Panc1 (cell line): ENCODE measurements at regions of chr2 and their contacts with region 1.

Region 1: GRCh38 chr2:223513771-223514455 is 88.2 kb downstream of the SCG2 start:
- DNase-seq: no peak
- ATAC-seq: no peak
- H3K4me3 ChIP-seq: no peak overlapping the region
- H3K27ac ChIP-seq: no peak overlapping the region
- H3K4me1 ChIP-seq: no peaks in the 10 kb centered on the region
- H3K27me3 ChIP-seq: no peaks in the 10 kb centered on the region
- CTCF ChIP-seq: no peak

Region 2: DNA sequence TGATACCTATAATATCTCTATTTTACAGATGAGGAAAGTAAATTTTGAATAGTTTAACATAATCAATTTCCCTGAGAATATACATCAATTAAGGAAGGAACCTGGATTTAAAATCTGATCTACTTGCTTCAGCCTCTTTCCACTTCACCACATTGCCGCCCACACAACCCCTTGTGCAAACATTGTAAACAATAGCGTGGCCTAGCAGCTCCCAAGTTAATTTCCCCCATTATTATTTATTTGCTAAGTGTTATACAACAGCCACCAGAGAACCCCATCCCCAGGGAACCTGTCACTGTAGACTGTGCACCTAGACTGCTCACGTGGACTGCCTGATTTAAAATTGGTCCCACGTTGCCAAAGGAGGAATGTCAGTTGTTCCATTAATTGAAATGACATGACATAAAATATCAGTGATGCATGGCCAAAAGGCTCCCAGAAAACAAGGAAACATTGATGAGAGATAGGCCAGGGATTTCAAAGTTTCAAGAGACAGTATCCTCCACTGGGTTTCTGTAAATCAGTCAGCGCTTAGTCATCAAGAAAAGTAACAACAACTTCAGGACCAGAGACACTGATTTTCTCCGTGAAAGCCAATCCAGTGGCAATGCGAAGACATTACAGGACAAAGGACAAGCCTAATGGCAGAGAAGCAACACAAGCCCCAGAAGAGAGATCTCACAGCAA is 47.0 kb after region 1 on chr2:
- CTCF ChIA-PET with region 1: no interaction called
- POLR2A ChIA-PET with region 1: no interaction called
- in situ Hi-C with region 1: no loop called
- intact Hi-C with region 1: no loop called
- DNase-seq: no peak
- ATAC-seq: peak; percentile 53
- H3K4me3 ChIP-seq: no peak overlapping the region
- H3K27ac ChIP-seq: peak overlapping the region; percentile 42; the same call in 1 of the 2 replicates
- H3K4me1 ChIP-seq: peaks cover 20% of the 10 kb centered on the region
- H3K27me3 ChIP-seq: no peaks in the 10 kb centered on the region
- CTCF ChIP-seq: no peak

Region 3: GRCh38 chr2:223725494-223725893 is 211.6 kb after region 1 on chr2:
- CTCF ChIA-PET with region 1: no interaction called
- POLR2A ChIA-PET with region 1: interaction called, 12 read pairs
- in situ Hi-C with region 1: no loop called
- intact Hi-C with region 1: no loop called
- DNase-seq: peak; percentile 90
- ATAC-seq: peak; percentile 97
- H3K4me3 ChIP-seq: peak overlapping the region; percentile 4 to 11; a peak in 3 of 4 replicates
- H3K27ac ChIP-seq: peak overlapping the region; percentile 89
- H3K4me1 ChIP-seq: peaks cover 27% of the 10 kb centered on the region
- H3K27me3 ChIP-seq: no peaks in the 10 kb centered on the region
- CTCF ChIP-seq: no peak